ENCODE measurements at regions of chr3 and their contacts with region 1.

Region 1: DNA sequence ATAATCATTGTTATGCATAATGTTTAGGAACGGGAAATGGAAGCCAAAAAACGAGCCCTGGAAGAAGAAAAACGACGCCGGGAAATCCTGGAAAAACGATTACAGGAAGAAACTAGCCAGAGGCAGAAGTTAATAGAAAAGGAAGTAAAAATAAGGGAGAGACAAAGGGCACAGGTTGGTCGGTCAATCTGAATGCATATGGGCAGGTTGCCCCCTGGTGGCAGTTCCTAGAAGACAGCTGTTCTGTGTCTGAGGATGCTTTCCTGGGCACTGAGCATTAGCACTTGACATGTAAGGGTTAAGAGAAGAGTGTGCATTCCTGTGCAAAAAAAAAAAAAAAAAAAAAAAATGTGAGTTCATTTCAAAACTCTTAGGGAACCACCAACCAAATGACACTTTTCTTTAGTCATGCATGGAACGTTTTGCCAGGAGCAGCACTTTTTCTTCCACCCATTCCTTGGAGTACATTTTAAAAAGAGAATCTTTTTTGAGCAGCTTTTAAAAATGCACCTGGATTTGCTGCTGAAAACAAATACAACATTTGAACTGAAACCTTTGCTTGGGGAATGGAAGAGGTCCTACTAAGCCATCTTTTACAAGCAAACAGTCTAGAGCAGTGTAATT is 11.1 kb upstream of the ABHD10 start:
- DNase-seq: peak; percentile 88
- H3K4me3 ChIP-seq: no peak overlapping the region
- H3K27ac ChIP-seq: peak overlapping the region in 7 of 8 donors; percentile 60 to 81 (median 74)
- H3K4me1 ChIP-seq: peaks cover 6 to 22% (median 15%) of the 10 kb centered on the region in 6 donors
- H3K27me3 ChIP-seq: no peaks in the 10 kb centered on the region
- CTCF ChIP-seq: peak; percentile 59 to 89 (median 86)
- POLR2A ChIP-seq: no peak

Region 2: GRCh38 chr3:111534701-111535100 is 433.1 kb before region 1 on chr3:
- intact Hi-C with region 1: no loop called
- DNase-seq: no peak
- H3K4me3 ChIP-seq: no peak overlapping the region
- H3K27ac ChIP-seq: no peak overlapping the region
- H3K4me1 ChIP-seq: peaks cover 13 to 21% (median 17%) of the 10 kb centered on the region in 6 donors
- H3K27me3 ChIP-seq: peaks cover 0 to 6% (median 0%) of the 10 kb centered on the region in 7 donors
- CTCF ChIP-seq: no peak
- POLR2A ChIP-seq: no peak

Region 3: DNA sequence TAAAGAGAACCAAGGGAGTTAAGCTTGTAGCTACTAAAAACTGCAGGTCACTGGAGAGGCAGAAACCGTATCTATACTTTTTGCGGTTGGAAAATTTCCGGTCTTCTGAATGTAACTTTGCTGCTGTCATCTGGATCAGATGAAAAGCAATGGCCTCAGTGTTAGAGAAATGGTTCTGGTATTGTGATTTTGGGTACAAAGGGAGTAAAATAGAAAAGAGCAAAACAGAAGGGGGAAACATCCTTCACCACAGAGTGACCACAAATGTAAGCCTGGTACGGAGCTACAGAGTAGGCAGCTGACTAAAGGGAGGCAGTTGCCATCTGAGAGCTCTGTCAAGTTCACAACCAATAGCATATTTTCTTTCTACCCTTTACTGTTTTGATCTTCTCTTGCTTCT is 420.1 kb before region 1 on chr3:
- intact Hi-C with region 1: no loop called
- DNase-seq: no peak
- H3K4me3 ChIP-seq: peak overlapping the region in 2 of 8 donors; percentile 0 to 47
- H3K27ac ChIP-seq: peak overlapping the region; percentile 1 to 90 (median 60)
- H3K4me1 ChIP-seq: peaks cover 15 to 93% (median 37%) of the 10 kb centered on the region in 6 donors
- H3K27me3 ChIP-seq: no peaks in the 10 kb centered on the region
- CTCF ChIP-seq: no peak
- POLR2A ChIP-seq: no peak

Region 4: GRCh38 chr3:111650378-111651275 is 317.1 kb before region 1 on chr3:
- intact Hi-C with region 1: no loop called
- DNase-seq: no peak
- H3K4me3 ChIP-seq: no peak overlapping the region
- H3K27ac ChIP-seq: no peak overlapping the region
- H3K4me1 ChIP-seq: no peaks in the 10 kb centered on the region
- H3K27me3 ChIP-seq: no peaks in the 10 kb centered on the region
- CTCF ChIP-seq: no peak
- POLR2A ChIP-seq: no peak

Region 5: DNA sequence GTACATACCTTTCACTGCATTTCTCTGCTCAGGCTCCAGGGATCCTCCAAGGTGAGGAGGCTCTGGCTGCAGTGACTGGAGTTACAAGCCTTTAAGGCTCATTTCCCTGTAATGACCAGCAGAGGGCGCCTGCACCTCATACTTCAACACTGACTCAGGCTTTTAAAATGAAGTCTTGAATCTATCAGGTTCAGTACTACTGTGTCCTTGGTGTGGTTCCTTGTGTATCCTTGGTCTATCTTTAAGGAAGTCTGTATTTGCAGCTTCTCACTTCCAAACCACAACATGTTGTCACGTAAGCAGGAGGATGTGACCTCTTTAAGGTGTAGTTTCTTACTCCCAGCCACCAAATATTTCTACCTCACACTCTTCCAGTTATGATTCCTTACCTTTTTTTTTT is 250.2 kb before region 1 on chr3:
- intact Hi-C with region 1: loop called (anchors 2 kb)
- DNase-seq: peak; percentile 85
- H3K4me3 ChIP-seq: no peak overlapping the region
- H3K27ac ChIP-seq: peak overlapping the region in 3 of 8 donors; percentile 33 to 39 (median 38)
- H3K4me1 ChIP-seq: peaks cover 4 to 17% (median 7%) of the 10 kb centered on the region in 6 donors
- H3K27me3 ChIP-seq: no peaks in the 10 kb centered on the region
- CTCF ChIP-seq: peak; percentile 82 to 94 (median 92)
- POLR2A ChIP-seq: no peak

Region 6: GRCh38 chr3:111859974-111860859 is 107.5 kb before region 1 on chr3:
- intact Hi-C with region 1: loop called (anchors 5 kb)
- DNase-seq: peak; percentile 87
- H3K4me3 ChIP-seq: peak overlapping the region; percentile 59 to 87 (median 67)
- H3K27ac ChIP-seq: peak overlapping the region; percentile 82 to 94 (median 92)
- H3K4me1 ChIP-seq: peaks cover 4 to 68% (median 38%) of the 10 kb centered on the region in 6 donors
- H3K27me3 ChIP-seq: peaks cover 0 to 23% (median 0%) of the 10 kb centered on the region in 7 donors
- CTCF ChIP-seq: peak in 10 of 11 experiments; percentile 20 to 69 (median 52)
- POLR2A ChIP-seq: peak in 1 of 3 donors; percentile 69

Measured in spleen (tissue), 13 donors.